AG04450 (cell line): ENCODE measurements at regions of chr7 and their contacts with region 1.

Region 1: GRCh38 chr7:127347567-127348246 is 44.8 kb downstream of the ZNF800 start:
- DNase-seq: peak; percentile 10
- H3K4me3 ChIP-seq: peak overlapping the region; percentile 55
- H3K27ac ChIP-seq: no peak overlapping the region
- H3K27me3 ChIP-seq: no peaks in the 10 kb centered on the region
- CTCF ChIP-seq: peak; percentile 39

Region 2: GRCh38 chr7:126996659-126997058 is 351.0 kb before region 1 on chr7:
- CTCF ChIA-PET with region 1: no interaction called
- POLR2A ChIA-PET with region 1: no interaction called
- DNase-seq: no peak
- H3K4me3 ChIP-seq: no peak overlapping the region
- H3K27ac ChIP-seq: no peak overlapping the region
- H3K27me3 ChIP-seq: no peaks in the 10 kb centered on the region
- CTCF ChIP-seq: no peak

Region 3: DNA sequence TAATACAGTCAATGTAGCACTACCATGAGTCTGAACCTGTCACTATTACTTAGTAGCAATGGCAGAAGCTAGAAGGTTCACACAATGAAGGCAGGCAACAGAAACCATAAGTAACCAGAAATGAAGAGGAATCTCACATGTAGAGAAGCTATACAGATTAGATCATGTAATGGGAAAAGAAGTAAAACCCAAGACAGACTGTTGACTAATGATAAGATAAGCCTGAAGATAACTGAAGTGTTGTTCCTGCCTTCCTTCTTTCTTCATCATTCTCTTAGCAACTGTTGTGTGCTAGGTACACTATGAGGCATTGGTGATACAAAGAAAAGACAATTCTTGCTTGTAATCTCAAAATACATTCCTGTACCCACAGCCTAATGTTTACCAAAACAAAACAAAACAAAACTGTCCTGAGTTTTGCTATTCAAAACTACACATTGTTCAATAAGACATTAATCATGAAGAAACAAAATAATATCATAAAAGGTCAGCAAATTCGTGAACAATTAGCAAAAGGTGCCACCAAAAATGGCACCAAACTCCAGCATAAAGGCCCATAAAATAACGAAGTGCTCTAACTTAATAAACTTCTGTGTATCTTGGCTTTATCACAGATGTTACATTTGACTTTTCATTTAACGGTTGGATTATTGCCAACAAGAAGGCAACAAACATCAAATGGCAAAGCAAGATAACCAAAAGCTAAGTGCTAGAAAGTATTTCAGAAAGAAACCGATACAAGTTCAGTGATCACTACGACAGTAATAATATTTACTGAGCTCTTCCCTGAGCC is 17.7 kb after region 1 on chr7:
- CTCF ChIA-PET with region 1: interaction called, 32 read pairs
- POLR2A ChIA-PET with region 1: no interaction called
- DNase-seq: no peak
- H3K4me3 ChIP-seq: no peak overlapping the region
- H3K27ac ChIP-seq: no peak overlapping the region
- H3K27me3 ChIP-seq: no peaks in the 10 kb centered on the region
- CTCF ChIP-seq: no peak

Region 4: DNA sequence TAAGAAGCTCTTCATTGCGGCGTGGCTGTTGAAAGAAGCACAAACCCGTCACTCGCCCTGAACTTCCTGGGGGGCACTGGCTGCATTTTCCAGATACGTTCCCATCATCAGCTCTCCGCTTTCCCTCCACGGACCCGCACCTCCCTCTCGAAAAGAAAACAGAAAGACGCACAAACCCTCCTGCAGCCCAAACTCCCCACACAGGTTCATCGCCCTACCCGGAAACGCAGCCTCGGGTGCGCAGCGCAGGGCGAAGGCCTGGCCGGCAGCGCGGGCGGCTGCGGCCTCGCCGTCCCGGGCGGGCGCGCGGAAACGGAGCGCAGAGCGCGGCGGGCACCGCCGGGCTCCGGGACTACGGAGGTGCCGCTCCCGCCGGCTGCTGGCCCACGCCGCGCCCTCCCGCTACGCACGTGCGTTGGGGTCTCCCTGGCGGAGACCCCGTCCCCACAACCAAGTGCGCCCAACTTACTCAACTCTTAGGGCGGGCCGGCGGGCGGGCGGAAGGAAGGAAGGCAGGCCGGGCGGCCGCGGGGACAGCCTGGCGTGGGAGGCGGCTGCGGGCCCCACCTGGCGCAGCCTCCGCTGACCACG is 44.0 kb after region 1 on chr7:
- CTCF ChIA-PET with region 1: interaction called, 13 read pairs
- POLR2A ChIA-PET with region 1: interaction called, 4 read pairs
- DNase-seq: no peak
- H3K4me3 ChIP-seq: peak overlapping the region; percentile 87
- H3K27ac ChIP-seq: no peak overlapping the region
- H3K27me3 ChIP-seq: no peaks in the 10 kb centered on the region
- CTCF ChIP-seq: no peak

Region 5: GRCh38 chr7:127447326-127447945 is 99.7 kb after region 1 on chr7:
- CTCF ChIA-PET with region 1: interaction called, 15 read pairs
- POLR2A ChIA-PET with region 1: no interaction called
- DNase-seq: peak; percentile 3
- H3K4me3 ChIP-seq: no peak overlapping the region
- H3K27ac ChIP-seq: no peak overlapping the region
- H3K27me3 ChIP-seq: no peaks in the 10 kb centered on the region
- CTCF ChIP-seq: peak; percentile 51

Region 6: GRCh38 chr7:127514499-127514898 is 166.8 kb after region 1 on chr7:
- CTCF ChIA-PET with region 1: interaction called, 32 read pairs
- POLR2A ChIA-PET with region 1: no interaction called
- DNase-seq: peak; percentile 24
- H3K4me3 ChIP-seq: no peak overlapping the region
- H3K27ac ChIP-seq: no peak overlapping the region
- H3K27me3 ChIP-seq: no peaks in the 10 kb centered on the region
- CTCF ChIP-seq: peak; percentile 51